Activated CD4-positive, alpha-beta memory T cell treated with anti-CD3 and anti-CD28 coated beads for 36 hours (primary cell): ENCODE measurements at regions of chr3 and their contacts with region 1.

Region 1: DNA sequence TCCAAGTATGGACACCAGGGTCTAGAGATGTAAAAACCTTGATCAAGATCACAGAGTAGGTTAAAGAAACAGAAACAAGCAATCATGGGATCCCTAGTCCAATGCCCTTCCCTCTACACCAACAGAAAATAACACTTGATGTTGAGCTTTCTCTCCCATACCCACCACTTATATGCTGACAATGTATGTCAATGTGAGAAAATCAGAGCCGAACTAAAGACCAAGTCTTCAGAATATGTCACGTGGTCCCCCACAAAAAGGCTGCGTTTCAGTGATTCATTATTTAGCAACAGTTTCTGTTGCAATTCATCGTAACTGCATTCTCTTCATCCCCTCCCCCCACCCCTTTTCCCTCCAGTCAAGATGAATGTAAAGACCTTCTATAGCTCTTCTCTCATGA is 278.9 kb upstream of the STT3B start:
- DNase-seq: peak; percentile 62
- H3K4me3 Mint-ChIP-seq: peak overlapping the region; percentile 30
- H3K27ac Mint-ChIP-seq: peak overlapping the region; percentile 96
- H3K4me1 Mint-ChIP-seq: peaks cover 62% of the 10 kb centered on the region
- H3K27me3 Mint-ChIP-seq: no peaks in the 10 kb centered on the region

Region 2: GRCh38 chr3:31077021-31077601 is 176.7 kb before region 1 on chr3:
- CTCF ChIA-PET with region 1: no interaction called
- POLR2A ChIA-PET with region 1: no interaction called
- intact Hi-C with region 1: loop called (anchors 1 kb)
- DNase-seq: peak; percentile 73
- H3K4me3 Mint-ChIP-seq: no peak overlapping the region
- H3K27ac Mint-ChIP-seq: peak overlapping the region; percentile 1
- H3K4me1 Mint-ChIP-seq: peaks cover 18% of the 10 kb centered on the region
- H3K27me3 Mint-ChIP-seq: no peaks in the 10 kb centered on the region

Region 3: DNA sequence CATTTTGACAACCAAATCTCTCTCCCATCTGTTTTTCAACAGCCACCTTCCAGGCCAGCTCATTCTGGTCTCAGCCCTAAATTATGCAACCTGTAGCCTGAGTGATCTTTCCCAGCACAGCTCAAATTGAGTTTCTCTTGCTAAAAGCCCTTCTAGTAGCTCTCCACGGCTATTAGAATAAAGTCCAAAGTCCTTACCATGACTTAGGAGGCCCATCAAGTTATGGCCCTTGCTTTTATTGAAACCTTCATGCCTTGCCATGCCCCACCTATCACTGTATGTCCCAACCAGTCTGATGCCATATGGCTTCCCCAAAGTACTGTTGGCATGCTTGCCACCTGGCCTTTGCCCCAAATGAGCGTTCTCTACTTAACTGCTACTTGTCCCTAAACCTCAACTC is 55.8 kb before region 1 on chr3:
- CTCF ChIA-PET with region 1: no interaction called
- POLR2A ChIA-PET with region 1: no interaction called
- intact Hi-C with region 1: no loop called
- DNase-seq: no peak
- H3K4me3 Mint-ChIP-seq: no peak overlapping the region
- H3K27ac Mint-ChIP-seq: no peak overlapping the region
- H3K4me1 Mint-ChIP-seq: peaks cover 20% of the 10 kb centered on the region
- H3K27me3 Mint-ChIP-seq: no peaks in the 10 kb centered on the region

Region 4: GRCh38 chr3:31213869-31214486 is 39.8 kb before region 1 on chr3:
- CTCF ChIA-PET with region 1: interaction called, 3 read pairs
- POLR2A ChIA-PET with region 1: interaction called, 4 read pairs
- intact Hi-C with region 1: loop called (anchors 1 kb)
- DNase-seq: peak; percentile 57
- H3K4me3 Mint-ChIP-seq: peak overlapping the region; percentile 1
- H3K27ac Mint-ChIP-seq: peak overlapping the region; percentile 82
- H3K4me1 Mint-ChIP-seq: peaks cover 94% of the 10 kb centered on the region
- H3K27me3 Mint-ChIP-seq: no peaks in the 10 kb centered on the region

Region 5: DNA sequence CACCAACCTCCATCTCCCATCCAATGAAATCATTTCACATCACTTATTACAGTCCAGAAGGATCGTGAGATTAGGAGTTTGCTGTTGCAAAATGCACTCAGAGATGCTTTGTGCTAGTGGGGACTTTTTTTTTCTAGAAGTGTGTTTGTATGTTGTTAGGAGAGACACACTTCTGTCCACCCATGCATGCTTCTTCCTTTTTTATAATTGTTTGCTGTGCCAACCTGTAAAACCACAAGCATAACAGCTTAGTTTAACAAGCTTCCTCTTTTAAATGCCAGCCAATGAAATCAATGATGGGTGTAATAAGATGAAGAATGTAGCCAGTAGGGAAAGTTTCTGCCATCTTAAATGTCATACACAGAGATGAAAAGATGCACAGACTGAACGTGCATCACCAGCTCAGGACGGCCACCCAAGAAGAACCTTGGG is 26.6 kb before region 1 on chr3:
- CTCF ChIA-PET with region 1: no interaction called
- POLR2A ChIA-PET with region 1: interaction called, 5 read pairs
- intact Hi-C with region 1: loop called (anchors 1 kb)
- DNase-seq: no peak
- H3K4me3 Mint-ChIP-seq: peak overlapping the region; percentile 2
- H3K27ac Mint-ChIP-seq: peak overlapping the region; percentile 84
- H3K4me1 Mint-ChIP-seq: peaks cover 87% of the 10 kb centered on the region
- H3K27me3 Mint-ChIP-seq: no peaks in the 10 kb centered on the region

Region 6: GRCh38 chr3:31356941-31357340 is 103.2 kb after region 1 on chr3:
- CTCF ChIA-PET with region 1: no interaction called
- POLR2A ChIA-PET with region 1: interaction called, 10 read pairs
- intact Hi-C with region 1: loop called (anchors 1 kb)
- DNase-seq: peak; percentile 31
- H3K4me3 Mint-ChIP-seq: no peak overlapping the region
- H3K27ac Mint-ChIP-seq: peak overlapping the region; percentile 66
- H3K4me1 Mint-ChIP-seq: peaks cover 38% of the 10 kb centered on the region
- H3K27me3 Mint-ChIP-seq: no peaks in the 10 kb centered on the region

Region 7: GRCh38 chr3:31979006-31979697 is 725.4 kb after region 1 on chr3:
- CTCF ChIA-PET with region 1: no interaction called
- POLR2A ChIA-PET with region 1: no interaction called
- intact Hi-C with region 1: loop called (anchors 1 kb)
- DNase-seq: no peak
- H3K4me3 Mint-ChIP-seq: peak overlapping the region; percentile 57
- H3K27ac Mint-ChIP-seq: peak overlapping the region; percentile 50
- H3K4me1 Mint-ChIP-seq: peaks cover 28% of the 10 kb centered on the region
- H3K27me3 Mint-ChIP-seq: peaks cover 62% of the 10 kb centered on the region